ENCODE measurements at regions of chr17 and their contacts with region 1.

Region 1: DNA sequence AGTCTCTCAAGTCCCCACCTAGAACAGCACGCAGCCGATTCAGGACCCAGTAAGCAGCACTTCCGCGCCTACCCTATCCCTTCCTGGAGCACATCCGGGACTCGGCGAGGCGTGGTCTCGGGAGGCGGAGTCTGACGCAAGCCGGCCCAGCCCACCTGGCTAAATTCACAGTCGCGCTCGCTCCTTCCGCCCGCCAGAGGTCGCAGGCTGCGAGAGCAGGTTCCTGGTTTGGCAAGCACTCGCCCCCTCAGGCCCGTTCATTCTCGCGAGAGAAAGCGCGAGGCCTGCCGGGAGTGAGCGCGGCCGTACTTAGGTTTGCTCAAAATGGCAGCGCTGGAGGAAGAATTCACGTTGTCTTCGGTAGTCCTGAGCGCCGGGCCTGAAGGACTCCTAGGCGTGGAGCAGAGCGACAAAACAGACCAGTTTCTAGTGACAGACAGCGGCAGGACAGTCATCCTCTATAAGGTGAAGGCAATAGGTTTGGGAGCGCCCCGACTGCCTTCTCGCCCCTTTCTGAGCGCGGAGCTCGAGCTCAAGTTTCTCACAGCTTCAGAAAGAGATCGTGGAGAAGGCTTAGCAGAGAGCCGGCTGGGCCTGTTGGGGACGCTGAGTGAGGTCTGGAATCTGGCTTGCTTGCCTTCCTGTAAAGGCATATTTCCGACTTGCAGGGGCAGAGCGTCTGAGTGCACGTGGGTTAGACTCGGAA is at the start of gene NOL11:
- DNase-seq: peak; percentile 88
- ATAC-seq: peak; percentile 100
- H3K4me3 ChIP-seq: peak within 1 kb of the TSS; percentile 97 to 100
- H3K27ac ChIP-seq: peak within 1 kb of the TSS; percentile 92
- H3K4me1 ChIP-seq: peaks cover 4% of the 10 kb centered on the region
- H3K27me3 ChIP-seq: no peaks in the 10 kb centered on the region
- CTCF ChIP-seq: peak; percentile 93
- total RNA-seq, gene NOL11: 41.0 TPM

Region 2: DNA sequence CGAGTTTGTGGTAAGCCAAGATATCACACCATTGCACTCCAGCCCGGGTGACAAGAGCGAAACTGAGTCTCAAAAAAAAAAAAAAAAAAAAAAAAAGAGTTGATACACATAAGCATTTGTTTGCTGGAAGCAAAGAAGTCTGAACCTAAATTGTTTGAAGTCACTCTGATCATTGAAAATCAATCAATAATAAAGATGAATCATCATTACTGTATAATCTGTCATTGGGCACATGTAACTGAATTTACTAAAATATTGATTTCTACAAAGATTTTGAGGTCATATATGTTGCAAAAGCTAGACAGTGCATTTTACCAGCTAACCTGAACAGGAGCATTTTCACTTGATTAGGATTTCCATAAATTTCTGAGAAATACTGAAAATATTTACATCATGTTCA is 34.7 kb before region 1 on chr17:
- CTCF ChIA-PET with region 1: no interaction called
- POLR2A ChIA-PET with region 1: interaction called, 13 read pairs
- in situ Hi-C with region 1: no loop called
- intact Hi-C with region 1: no loop called
- DNase-seq: no peak
- ATAC-seq: no peak
- H3K4me3 ChIP-seq: no peak overlapping the region
- H3K27ac ChIP-seq: no peak overlapping the region
- H3K4me1 ChIP-seq: no peaks in the 10 kb centered on the region
- H3K27me3 ChIP-seq: no peaks in the 10 kb centered on the region
- CTCF ChIP-seq: no peak